ENCODE measurements at regions of chrX and their contacts with region 1.

Region 1: GRCh38 chrX:135421537-135421931 is 210 bp upstream of the SMIM10L2A start:
- DNase-seq: peak; percentile 82
- H3K4me3 Mint-ChIP-seq: peak overlapping the region; percentile 73
- H3K27ac Mint-ChIP-seq: peak overlapping the region; percentile 29
- H3K4me1 Mint-ChIP-seq: peaks cover 4% of the 10 kb centered on the region
- H3K27me3 Mint-ChIP-seq: peaks cover 18% of the 10 kb centered on the region

Region 2: DNA sequence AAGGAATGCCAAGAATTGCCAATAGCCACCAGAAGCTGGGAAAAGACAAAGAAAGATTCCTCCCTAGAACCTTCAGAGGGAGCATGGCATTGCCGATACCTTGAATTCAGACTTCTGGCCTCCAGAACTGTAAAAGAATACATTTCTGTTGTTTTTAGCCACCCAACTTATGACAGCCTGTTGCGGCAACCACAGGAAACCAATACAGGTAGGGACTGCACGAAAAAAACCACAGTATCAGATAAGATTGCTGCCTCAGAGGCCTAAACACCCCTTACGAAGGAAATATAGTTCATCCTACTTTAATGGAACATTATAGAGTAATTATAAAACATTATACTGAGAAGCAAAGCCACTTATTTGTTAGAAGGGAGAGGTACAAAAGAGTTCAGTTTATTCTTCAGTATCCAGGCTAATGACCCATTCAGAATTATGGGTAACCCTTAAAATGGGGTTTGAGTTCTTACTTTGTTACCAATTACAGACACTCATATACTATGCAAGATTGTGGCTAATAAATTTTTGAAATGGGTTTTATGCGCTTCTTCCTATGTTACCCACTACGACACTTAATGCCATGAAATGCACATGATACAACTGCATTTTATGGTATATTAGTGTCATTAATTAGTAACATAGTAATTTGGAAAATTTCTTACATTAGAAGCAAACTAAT is 37.2 kb before region 1 on chrX:
- intact Hi-C with region 1: loop called (anchors 5 kb)
- DNase-seq: peak; percentile 49
- H3K4me3 Mint-ChIP-seq: peak overlapping the region; percentile 69
- H3K27ac Mint-ChIP-seq: peak overlapping the region; percentile 85
- H3K4me1 Mint-ChIP-seq: peaks cover 36% of the 10 kb centered on the region
- H3K27me3 Mint-ChIP-seq: no peaks in the 10 kb centered on the region

Region 3: DNA sequence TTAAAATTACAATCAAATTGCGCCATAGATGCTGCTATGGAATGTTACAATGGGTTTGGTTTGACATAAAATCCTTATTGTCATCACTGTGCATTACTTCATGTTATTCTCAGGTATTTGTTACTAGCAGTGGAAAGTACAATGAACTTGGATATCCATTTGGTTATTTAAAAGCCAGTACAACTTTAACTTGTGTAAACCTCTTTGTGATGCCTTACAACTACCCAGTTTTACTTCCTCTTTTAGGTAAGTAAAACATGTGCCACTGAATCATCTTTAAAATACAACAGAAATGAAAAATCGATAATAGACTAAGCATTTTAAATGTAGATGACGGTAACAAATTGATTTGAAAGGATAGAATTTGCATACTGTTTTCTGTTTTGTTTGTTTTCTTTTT is 134.5 kb after region 1 on chrX:
- intact Hi-C with region 1: loop called (anchors 5 kb)
- DNase-seq: no peak
- H3K4me3 Mint-ChIP-seq: no peak overlapping the region
- H3K27ac Mint-ChIP-seq: no peak overlapping the region
- H3K4me1 Mint-ChIP-seq: no peaks in the 10 kb centered on the region
- H3K27me3 Mint-ChIP-seq: no peaks in the 10 kb centered on the region